Transverse colon (tissue), 4 donors: ENCODE measurements at regions of chr2 and their contacts with region 1.

Region 1: GRCh38 chr2:231425811-231426728 is 30.6 kb downstream of the B3GNT7 start:
- DNase-seq: no peak
- H3K4me3 ChIP-seq: no peak overlapping the region
- H3K27ac ChIP-seq: no peak overlapping the region
- H3K4me1 ChIP-seq: no peaks in the 10 kb centered on the region
- H3K27me3 ChIP-seq: no peaks in the 10 kb centered on the region
- CTCF ChIP-seq: no peak
- EP300 ChIP-seq: no peak
- POLR2A ChIP-seq: no peak

Region 2: GRCh38 chr2:230824406-230824978 is 601.6 kb before region 1 on chr2:
- in situ Hi-C with region 1: loop called in 3 of 4 experiments (anchors 25 kb)
- intact Hi-C with region 1: no loop called
- DNase-seq: peak; percentile 45
- H3K4me3 ChIP-seq: peak overlapping the region in 2 of 4 donors; percentile 17 to 23
- H3K27ac ChIP-seq: no peak overlapping the region
- H3K4me1 ChIP-seq: peaks cover 0 to 16% (median 12%) of the 10 kb centered on the region in 4 donors
- H3K27me3 ChIP-seq: peaks cover 35% of the 10 kb centered on the region
- CTCF ChIP-seq: peak; percentile 64 to 80 (median 76)
- EP300 ChIP-seq: no peak
- POLR2A ChIP-seq: no peak

Region 3: GRCh38 chr2:230847883-230848388 is 578.1 kb before region 1 on chr2:
- in situ Hi-C with region 1: loop called in 2 of 4 experiments (anchors 25 kb)
- intact Hi-C with region 1: no loop called
- DNase-seq: peak; percentile 95
- H3K4me3 ChIP-seq: peak overlapping the region in 1 of 4 donors; percentile 8
- H3K27ac ChIP-seq: peak overlapping the region in 1 of 4 donors; percentile 28
- H3K4me1 ChIP-seq: peaks cover 0 to 12% (median 7%) of the 10 kb centered on the region in 4 donors
- H3K27me3 ChIP-seq: peaks cover 7% of the 10 kb centered on the region
- CTCF ChIP-seq: peak; percentile 89 to 94 (median 91)
- EP300 ChIP-seq: no peak
- POLR2A ChIP-seq: no peak

Region 4: GRCh38 chr2:231222318-231223055 is 203.6 kb before region 1 on chr2:
- in situ Hi-C with region 1: loop called in 2 of 4 experiments (anchors 25 kb)
- intact Hi-C with region 1: no loop called
- DNase-seq: no peak
- H3K4me3 ChIP-seq: no peak overlapping the region
- H3K27ac ChIP-seq: peak overlapping the region; percentile 70 to 85 (median 82)
- H3K4me1 ChIP-seq: peaks cover 10 to 34% (median 24%) of the 10 kb centered on the region in 4 donors
- H3K27me3 ChIP-seq: no peaks in the 10 kb centered on the region
- CTCF ChIP-seq: no peak
- EP300 ChIP-seq: no peak
- POLR2A ChIP-seq: no peak